Activated B cell treated with CpG ODN at 0.5 μM for 24 hours (primary cell): ENCODE measurements at regions of chr19 and their contacts with region 1.

Region 1: GRCh38 chr19:37466798-37467607 is at the start of gene ZNF569:
- DNase-seq: peak; percentile 82
- ATAC-seq: peak; percentile 69
- H3K4me3 Mint-ChIP-seq: peak within 1 kb of the TSS; percentile 99
- H3K27ac Mint-ChIP-seq: peak within 1 kb of the TSS; percentile 97
- H3K4me1 Mint-ChIP-seq: peaks cover 42% of the 10 kb centered on the region
- H3K27me3 Mint-ChIP-seq: no peaks in the 10 kb centered on the region
- CTCF ChIP-seq: no peak
- total RNA-seq, gene ZNF569: 6.1 and 6.8 TPM in 2 replicates

Region 2: GRCh38 chr19:36378625-36379509 is 1088.1 kb before region 1 on chr19 and contains the start of gene ZFP14:
- CTCF ChIA-PET with region 1: no interaction called
- POLR2A ChIA-PET with region 1: interaction called, 8 read pairs
- intact Hi-C with region 1: loop called (anchors 5 kb)
- DNase-seq: peak; percentile 92
- ATAC-seq: peak; percentile 99
- H3K4me3 Mint-ChIP-seq: peak within 1 kb of the TSS; percentile 94
- H3K27ac Mint-ChIP-seq: peak within 1 kb of the TSS; percentile 96
- H3K4me1 Mint-ChIP-seq: peaks cover 21% of the 10 kb centered on the region
- H3K27me3 Mint-ChIP-seq: no peaks in the 10 kb centered on the region
- CTCF ChIP-seq: no peak
- total RNA-seq, gene ZFP14: 7.7 and 10.4 TPM in 2 replicates

Region 3: GRCh38 chr19:36772311-36773222 is 694.4 kb before region 1 on chr19 and contains the start of gene ZNF850:
- CTCF ChIA-PET with region 1: no interaction called
- POLR2A ChIA-PET with region 1: interaction called, 4 read pairs
- intact Hi-C with region 1: loop called (anchors 1 kb)
- DNase-seq: peak; percentile 89
- ATAC-seq: peak; percentile 92
- H3K4me3 Mint-ChIP-seq: peak within 1 kb of the TSS; percentile 92
- H3K27ac Mint-ChIP-seq: peak within 1 kb of the TSS; percentile 85
- H3K4me1 Mint-ChIP-seq: peaks cover 24% of the 10 kb centered on the region
- H3K27me3 Mint-ChIP-seq: no peaks in the 10 kb centered on the region
- CTCF ChIP-seq: no peak
- total RNA-seq, gene ZNF850: 5.8 and 7.9 TPM in 2 replicates

Region 4: GRCh38 chr19:36915992-36916830 is 550.8 kb before region 1 on chr19 and contains the starts of genes ZNF568 and ZNF829:
- CTCF ChIA-PET with region 1: no interaction called
- POLR2A ChIA-PET with region 1: interaction called, 3 read pairs
- intact Hi-C with region 1: loop called (anchors 1 kb)
- DNase-seq: peak; percentile 87
- ATAC-seq: peak; percentile 93
- H3K4me3 Mint-ChIP-seq: peak within 1 kb of the TSS; percentile 91
- H3K27ac Mint-ChIP-seq: peak within 1 kb of the TSS; percentile 91
- H3K4me1 Mint-ChIP-seq: peaks cover 26% of the 10 kb centered on the region
- H3K27me3 Mint-ChIP-seq: no peaks in the 10 kb centered on the region
- CTCF ChIP-seq: no peak
- total RNA-seq, gene ZNF568: 12.0 and 13.4 TPM in 2 replicates
- total RNA-seq, gene ZNF829: 7.3 and 7.6 TPM in 2 replicates

Region 5: GRCh38 chr19:37217855-37218591 is 249.0 kb before region 1 on chr19 and contains the start of gene ZNF383:
- CTCF ChIA-PET with region 1: no interaction called
- POLR2A ChIA-PET with region 1: interaction called, 15 read pairs
- intact Hi-C with region 1: loop called (anchors 2 kb)
- DNase-seq: peak; percentile 81
- ATAC-seq: peak; percentile 89
- H3K4me3 Mint-ChIP-seq: peak within 1 kb of the TSS; percentile 98
- H3K27ac Mint-ChIP-seq: peak within 1 kb of the TSS; percentile 99
- H3K4me1 Mint-ChIP-seq: peaks cover 26% of the 10 kb centered on the region
- H3K27me3 Mint-ChIP-seq: no peaks in the 10 kb centered on the region
- CTCF ChIP-seq: no peak
- total RNA-seq, gene ZNF383: 19.9 and 25.5 TPM in 2 replicates

Region 6: DNA sequence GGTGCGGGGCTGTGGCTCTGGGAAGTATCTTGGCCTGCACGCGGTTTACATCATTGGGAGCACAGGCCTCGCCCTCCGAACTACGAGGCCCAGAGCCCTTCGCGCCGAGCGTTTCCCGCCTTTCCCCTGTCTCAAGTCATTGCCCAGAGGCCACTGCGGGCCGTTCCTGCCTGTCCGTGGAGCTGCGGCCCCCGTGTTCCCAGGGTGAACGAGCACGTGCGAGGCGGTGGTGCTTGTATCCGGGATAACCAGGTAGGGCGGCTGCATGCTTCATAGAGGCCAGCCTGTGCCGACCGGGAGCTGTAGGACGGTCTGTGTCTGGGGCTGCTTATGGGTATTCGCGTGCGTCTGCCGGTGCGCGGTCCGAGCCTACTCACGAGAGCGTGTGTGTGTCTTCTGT is 63.6 kb before region 1 on chr19:
- CTCF ChIA-PET with region 1: no interaction called
- POLR2A ChIA-PET with region 1: no interaction called
- intact Hi-C with region 1: no loop called
- DNase-seq: no peak
- ATAC-seq: no peak
- H3K4me3 Mint-ChIP-seq: no peak overlapping the region
- H3K27ac Mint-ChIP-seq: no peak overlapping the region
- H3K4me1 Mint-ChIP-seq: no peaks in the 10 kb centered on the region
- H3K27me3 Mint-ChIP-seq: no peaks in the 10 kb centered on the region
- CTCF ChIP-seq: no peak

Region 7: DNA sequence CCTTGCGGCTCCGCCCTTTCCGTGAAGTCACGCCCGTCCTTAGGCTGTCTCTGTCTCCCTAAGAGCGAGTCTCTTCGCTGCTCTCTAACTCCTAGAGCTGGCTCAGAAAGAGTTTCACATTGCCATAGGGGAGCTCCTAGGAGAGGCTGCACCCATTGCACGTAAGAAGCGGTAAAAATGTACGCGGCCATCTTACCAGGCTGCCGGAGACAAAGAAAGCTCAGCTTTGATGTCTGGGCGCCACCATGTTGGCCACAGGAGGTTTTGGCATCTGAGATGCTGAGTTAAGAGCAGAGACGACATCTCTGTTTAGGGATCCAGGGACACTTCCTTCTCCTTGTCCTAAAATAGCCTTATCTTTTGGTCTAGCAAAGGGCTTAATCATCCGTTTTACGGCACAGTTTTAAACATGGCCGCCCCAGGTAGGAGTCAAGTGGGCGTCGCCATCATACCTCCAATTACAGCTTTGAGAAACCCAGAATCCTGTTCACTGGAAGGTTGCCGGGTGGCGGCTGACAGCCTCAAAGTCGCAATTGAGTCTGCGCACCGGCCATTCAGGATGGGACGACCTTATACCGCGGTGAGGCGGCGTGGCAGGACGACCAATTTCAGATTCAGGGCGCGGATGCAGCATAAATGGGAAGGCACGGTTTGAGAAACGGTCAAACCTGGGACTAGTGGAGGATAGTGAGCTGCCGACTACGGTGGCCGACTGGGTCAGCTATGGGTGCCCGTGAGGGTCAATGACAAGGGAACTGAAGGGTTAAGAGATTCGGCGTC is 39.6 kb after region 1 on chr19 and contains the start of gene ZNF793:
- CTCF ChIA-PET with region 1: no interaction called
- POLR2A ChIA-PET with region 1: interaction called, 28 read pairs
- intact Hi-C with region 1: loop called (anchors 1 kb)
- DNase-seq: peak; percentile 70
- ATAC-seq: peak; percentile 87
- H3K4me3 Mint-ChIP-seq: no peak within 1 kb of the TSS
- H3K27ac Mint-ChIP-seq: no peak within 1 kb of the TSS
- H3K4me1 Mint-ChIP-seq: peaks cover 2% of the 10 kb centered on the region
- H3K27me3 Mint-ChIP-seq: no peaks in the 10 kb centered on the region
- CTCF ChIP-seq: no peak
- total RNA-seq, gene ZNF793: 8.4 and 8.7 TPM in 2 replicates

Region 8: DNA sequence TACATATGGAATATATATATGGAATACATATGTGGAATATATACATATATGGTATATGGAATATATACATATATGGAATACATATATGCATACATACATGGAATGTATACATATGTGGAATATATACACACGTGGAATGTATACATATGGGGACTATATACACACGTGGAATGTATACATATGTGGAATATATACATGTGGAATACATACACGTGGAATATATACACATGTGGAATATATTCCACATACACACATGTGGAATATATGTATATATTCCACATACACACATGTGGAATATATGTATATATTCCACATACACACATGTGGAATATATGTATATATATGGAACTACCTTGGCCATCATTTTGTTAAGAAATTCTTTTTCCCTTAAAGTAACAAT is 96.5 kb after region 1 on chr19:
- CTCF ChIA-PET with region 1: no interaction called
- POLR2A ChIA-PET with region 1: no interaction called
- intact Hi-C with region 1: no loop called
- DNase-seq: no peak
- ATAC-seq: no peak
- H3K4me3 Mint-ChIP-seq: no peak overlapping the region
- H3K27ac Mint-ChIP-seq: no peak overlapping the region
- H3K4me1 Mint-ChIP-seq: no peaks in the 10 kb centered on the region
- H3K27me3 Mint-ChIP-seq: no peaks in the 10 kb centered on the region
- CTCF ChIP-seq: no peak

Region 9: GRCh38 chr19:37691881-37692504 is 225.0 kb after region 1 on chr19:
- CTCF ChIA-PET with region 1: no interaction called
- POLR2A ChIA-PET with region 1: interaction called, 4 read pairs
- intact Hi-C with region 1: loop called (anchors 1 kb)
- DNase-seq: peak; percentile 69
- ATAC-seq: peak; percentile 94
- H3K4me3 Mint-ChIP-seq: peak overlapping the region; percentile 94
- H3K27ac Mint-ChIP-seq: peak overlapping the region; percentile 86
- H3K4me1 Mint-ChIP-seq: peaks cover 10% of the 10 kb centered on the region
- H3K27me3 Mint-ChIP-seq: no peaks in the 10 kb centered on the region
- CTCF ChIP-seq: no peak